ENCODE measurements at regions of chr2 and their contacts with region 1.

Region 1: DNA sequence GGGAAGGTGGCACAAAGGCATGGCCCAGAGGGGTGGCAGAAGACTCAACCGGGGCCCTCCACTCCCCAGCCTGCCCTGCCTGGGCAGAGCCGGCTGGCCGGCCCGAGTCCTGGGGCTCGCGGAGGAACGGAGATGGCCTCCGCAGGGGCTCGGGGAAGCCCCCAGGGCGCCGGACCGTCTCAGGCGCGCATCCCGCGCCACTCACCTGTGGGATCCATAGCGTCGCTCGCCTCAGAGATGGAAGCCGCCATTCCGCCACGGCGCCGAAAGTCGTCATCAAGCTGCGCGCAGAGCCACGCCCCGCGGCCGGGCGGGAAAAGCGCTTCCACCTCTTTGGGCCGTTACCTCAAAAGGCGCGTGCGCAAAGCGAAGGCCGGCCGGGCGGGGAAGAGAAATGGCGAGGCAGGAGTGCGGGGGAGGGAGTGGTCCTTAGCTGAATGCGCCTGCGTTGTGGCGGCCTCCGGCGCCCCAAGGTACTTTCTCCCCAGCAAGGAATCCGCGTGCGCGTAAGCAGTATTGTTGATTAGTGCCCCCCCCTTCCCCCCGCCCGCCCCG is at the start of gene SMPD4:
- DNase-seq: peak; percentile 98
- H3K4me3 Mint-ChIP-seq: peak within 1 kb of the TSS; percentile 92
- H3K27ac Mint-ChIP-seq: peak within 1 kb of the TSS; percentile 94
- H3K4me1 Mint-ChIP-seq: peaks cover 23% of the 10 kb centered on the region
- H3K27me3 Mint-ChIP-seq: no peaks in the 10 kb centered on the region
- total RNA-seq, gene SMPD4: 65.8 to 69.4 TPM

Region 2: DNA sequence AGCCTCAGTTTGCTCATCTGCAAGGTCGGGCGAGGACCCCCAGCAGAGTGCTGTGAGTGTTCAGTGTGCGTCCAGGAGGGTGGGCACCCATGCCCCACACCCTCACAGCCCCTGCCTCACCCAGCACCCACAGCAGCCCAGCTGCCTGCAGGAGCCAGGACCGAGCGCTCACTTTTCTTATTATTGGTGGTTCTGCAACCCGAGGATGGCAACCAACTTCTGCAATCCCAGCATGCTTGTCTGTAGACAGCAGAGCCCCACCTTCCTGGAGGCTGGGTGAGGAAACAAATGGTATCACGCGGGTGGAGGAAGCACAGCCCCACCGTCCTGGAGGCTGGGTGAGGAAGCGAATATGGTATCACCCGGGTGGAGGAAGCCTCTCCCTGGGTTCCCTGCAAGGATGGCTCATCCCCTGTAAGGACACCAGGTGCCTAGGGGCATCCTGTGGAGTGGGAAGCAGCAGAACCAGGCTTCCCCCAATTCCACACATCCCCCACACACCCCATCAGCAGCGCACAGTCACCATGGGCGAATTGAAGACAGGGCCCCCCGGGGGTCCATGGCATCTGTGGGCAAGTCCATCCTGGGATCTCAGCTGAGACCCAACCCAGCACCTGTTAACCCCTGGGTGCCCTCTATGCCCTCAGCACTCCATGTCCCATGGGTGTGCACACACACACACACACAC is 422.5 kb before region 1 on chr2:
- CTCF ChIA-PET with region 1: no interaction called
- POLR2A ChIA-PET with region 1: no interaction called
- intact Hi-C with region 1: no loop called
- DNase-seq: no peak
- H3K4me3 Mint-ChIP-seq: no peak overlapping the region
- H3K27ac Mint-ChIP-seq: no peak overlapping the region
- H3K4me1 Mint-ChIP-seq: no peaks in the 10 kb centered on the region
- H3K27me3 Mint-ChIP-seq: no peaks in the 10 kb centered on the region

Region 3: DNA sequence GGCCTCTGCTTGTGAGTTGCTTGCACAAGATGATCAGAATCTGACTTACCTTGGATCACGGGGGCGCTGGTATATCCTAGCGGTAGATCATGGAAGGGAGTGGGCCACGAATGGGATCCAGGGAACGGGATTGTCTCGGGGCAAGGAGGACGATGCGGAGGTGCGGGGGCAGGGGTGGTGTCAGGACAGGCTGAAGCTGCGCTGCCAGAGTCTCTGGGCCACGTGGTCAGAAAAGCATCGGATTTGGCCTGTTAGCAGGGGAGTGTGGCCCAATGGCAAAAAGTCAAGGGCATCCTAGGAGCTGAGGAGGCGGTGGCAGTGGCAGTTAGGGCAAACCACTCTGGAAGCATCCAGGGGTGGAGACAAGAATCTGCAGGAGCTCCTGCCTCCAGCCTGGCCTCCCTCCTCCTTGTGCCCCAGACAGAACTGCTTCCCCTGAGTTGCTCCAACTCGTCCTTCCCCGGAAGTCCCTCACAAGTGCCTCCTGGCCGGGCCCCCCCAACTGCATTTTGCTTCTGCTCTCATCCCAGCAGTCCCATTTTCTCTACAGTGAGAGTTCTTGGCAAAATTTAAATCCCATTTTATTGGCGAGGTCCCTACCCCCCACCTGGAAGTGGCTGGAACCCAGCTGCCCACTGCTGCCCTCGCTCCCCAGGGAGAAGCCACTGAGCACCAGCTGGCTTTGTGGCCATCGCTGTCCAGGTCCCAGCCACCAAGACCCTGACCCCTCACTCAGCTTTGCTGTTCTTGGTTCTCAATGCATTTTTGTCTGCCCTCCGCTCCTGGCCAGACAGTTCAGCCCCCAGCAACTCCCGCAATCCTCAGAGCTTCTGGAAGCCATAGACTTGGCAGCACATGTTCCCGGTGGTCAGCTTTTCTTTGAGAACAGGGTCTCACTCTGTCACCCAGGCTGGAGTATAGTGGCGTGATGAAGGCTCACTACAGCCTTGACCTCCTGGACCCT is 30.9 kb before region 1 on chr2:
- CTCF ChIA-PET with region 1: no interaction called
- POLR2A ChIA-PET with region 1: no interaction called
- intact Hi-C with region 1: loop called (anchors 5 kb)
- DNase-seq: no peak
- H3K4me3 Mint-ChIP-seq: no peak overlapping the region
- H3K27ac Mint-ChIP-seq: no peak overlapping the region
- H3K4me1 Mint-ChIP-seq: no peaks in the 10 kb centered on the region
- H3K27me3 Mint-ChIP-seq: peaks cover 4% of the 10 kb centered on the region

Region 4: GRCh38 chr2:130162968-130163367 is 18.4 kb before region 1 on chr2:
- CTCF ChIA-PET with region 1: no interaction called
- POLR2A ChIA-PET with region 1: no interaction called
- intact Hi-C with region 1: no loop called
- DNase-seq: no peak
- H3K4me3 Mint-ChIP-seq: no peak overlapping the region
- H3K27ac Mint-ChIP-seq: no peak overlapping the region
- H3K4me1 Mint-ChIP-seq: no peaks in the 10 kb centered on the region
- H3K27me3 Mint-ChIP-seq: no peaks in the 10 kb centered on the region

Region 5: GRCh38 chr2:130319536-130319935 is 138.1 kb after region 1 on chr2:
- CTCF ChIA-PET with region 1: no interaction called
- POLR2A ChIA-PET with region 1: no interaction called
- intact Hi-C with region 1: no loop called
- DNase-seq: no peak
- H3K4me3 Mint-ChIP-seq: no peak overlapping the region
- H3K27ac Mint-ChIP-seq: no peak overlapping the region
- H3K4me1 Mint-ChIP-seq: no peaks in the 10 kb centered on the region
- H3K27me3 Mint-ChIP-seq: peaks cover 15% of the 10 kb centered on the region

Region 6: GRCh38 chr2:130332271-130333073 is 151.1 kb after region 1 on chr2:
- CTCF ChIA-PET with region 1: interaction called, 26 read pairs
- POLR2A ChIA-PET with region 1: interaction called, 3 read pairs
- intact Hi-C with region 1: loop called (anchors 1 kb)
- DNase-seq: peak; percentile 81
- H3K4me3 Mint-ChIP-seq: no peak overlapping the region
- H3K27ac Mint-ChIP-seq: no peak overlapping the region
- H3K4me1 Mint-ChIP-seq: peaks cover 10% of the 10 kb centered on the region
- H3K27me3 Mint-ChIP-seq: peaks cover 14% of the 10 kb centered on the region

Region 7: GRCh38 chr2:130342533-130343275 is 161.3 kb after region 1 on chr2 and contains the start of gene IMP4:
- CTCF ChIA-PET with region 1: interaction called, 26 read pairs
- POLR2A ChIA-PET with region 1: interaction called, 20 read pairs
- intact Hi-C with region 1: loop called (anchors 1 kb)
- DNase-seq: peak; percentile 97
- H3K4me3 Mint-ChIP-seq: peak within 1 kb of the TSS; percentile 98
- H3K27ac Mint-ChIP-seq: peak within 1 kb of the TSS; percentile 99
- H3K4me1 Mint-ChIP-seq: peaks cover 23% of the 10 kb centered on the region
- H3K27me3 Mint-ChIP-seq: no peaks in the 10 kb centered on the region
- total RNA-seq, gene IMP4: 125 to 128 TPM

Region 8: GRCh38 chr2:130372055-130372832 is 190.8 kb after region 1 on chr2:
- CTCF ChIA-PET with region 1: interaction called, 3 read pairs
- POLR2A ChIA-PET with region 1: interaction called, 3 read pairs
- intact Hi-C with region 1: loop called (anchors 1 kb)
- DNase-seq: peak; percentile 82
- H3K4me3 Mint-ChIP-seq: peak overlapping the region; percentile 87
- H3K27ac Mint-ChIP-seq: peak overlapping the region; percentile 98
- H3K4me1 Mint-ChIP-seq: peaks cover 56% of the 10 kb centered on the region
- H3K27me3 Mint-ChIP-seq: no peaks in the 10 kb centered on the region

Region 9: DNA sequence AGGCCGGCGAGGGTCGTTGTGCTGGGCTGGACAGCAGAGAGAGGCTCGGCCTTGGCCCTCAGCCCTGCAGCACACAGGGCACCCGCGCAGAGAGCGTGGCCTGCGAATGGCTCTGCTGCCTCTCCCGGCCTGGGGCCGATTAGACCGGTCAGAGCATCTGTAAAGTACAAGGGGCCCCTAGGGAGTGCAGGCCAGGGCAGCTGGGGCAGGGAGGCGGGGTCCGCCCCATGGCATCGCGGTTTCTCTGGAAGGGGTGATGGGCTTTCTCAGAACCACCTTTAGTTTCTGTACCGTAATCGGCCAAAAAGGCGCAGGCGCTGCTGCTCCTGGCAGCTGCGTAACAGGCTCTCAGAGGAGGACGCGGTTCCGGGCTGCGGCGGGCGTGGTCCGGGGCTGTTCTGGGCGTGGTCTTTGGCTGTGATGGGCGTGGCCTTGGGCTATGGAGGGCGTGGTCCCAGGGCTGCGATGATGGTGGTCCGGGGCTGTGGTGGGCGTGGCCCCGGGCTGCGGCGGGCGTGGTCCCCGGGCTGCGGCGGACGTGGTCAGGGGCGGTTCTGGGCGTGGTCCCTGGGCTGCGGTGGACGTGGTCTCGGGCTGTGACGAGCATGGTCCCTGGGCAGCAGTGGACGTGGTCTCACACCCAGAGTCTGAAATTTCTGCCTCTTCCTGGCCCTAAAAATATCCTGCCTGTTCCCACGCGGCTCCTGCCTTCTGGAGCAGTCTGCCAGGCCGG is 546.0 kb after region 1 on chr2:
- CTCF ChIA-PET with region 1: no interaction called
- POLR2A ChIA-PET with region 1: no interaction called
- intact Hi-C with region 1: loop called (anchors 5 kb)
- DNase-seq: peak; percentile 95
- H3K4me3 Mint-ChIP-seq: peak overlapping the region; percentile 70
- H3K27ac Mint-ChIP-seq: peak overlapping the region; percentile 55
- H3K4me1 Mint-ChIP-seq: peaks cover 9% of the 10 kb centered on the region
- H3K27me3 Mint-ChIP-seq: peaks cover 1% of the 10 kb centered on the region

Region 10: GRCh38 chr2:131093006-131093695 is 911.7 kb after region 1 on chr2 and contains the start of gene FAM168B:
- CTCF ChIA-PET with region 1: no interaction called
- POLR2A ChIA-PET with region 1: no interaction called
- intact Hi-C with region 1: loop called (anchors 5 kb)
- DNase-seq: peak; percentile 92
- H3K4me3 Mint-ChIP-seq: peak within 1 kb of the TSS; percentile 96
- H3K27ac Mint-ChIP-seq: peak within 1 kb of the TSS; percentile 96
- H3K4me1 Mint-ChIP-seq: peaks cover 15% of the 10 kb centered on the region
- H3K27me3 Mint-ChIP-seq: no peaks in the 10 kb centered on the region
- total RNA-seq, gene FAM168B: 50.5 to 57.1 TPM

Measured in activated CD4-positive, alpha-beta memory T cell treated with anti-CD3 and anti-CD28 coated beads for 36 hours (primary cell).